ENCODE measurements at regions of chr17 and their contacts with region 1.

Region 1: DNA sequence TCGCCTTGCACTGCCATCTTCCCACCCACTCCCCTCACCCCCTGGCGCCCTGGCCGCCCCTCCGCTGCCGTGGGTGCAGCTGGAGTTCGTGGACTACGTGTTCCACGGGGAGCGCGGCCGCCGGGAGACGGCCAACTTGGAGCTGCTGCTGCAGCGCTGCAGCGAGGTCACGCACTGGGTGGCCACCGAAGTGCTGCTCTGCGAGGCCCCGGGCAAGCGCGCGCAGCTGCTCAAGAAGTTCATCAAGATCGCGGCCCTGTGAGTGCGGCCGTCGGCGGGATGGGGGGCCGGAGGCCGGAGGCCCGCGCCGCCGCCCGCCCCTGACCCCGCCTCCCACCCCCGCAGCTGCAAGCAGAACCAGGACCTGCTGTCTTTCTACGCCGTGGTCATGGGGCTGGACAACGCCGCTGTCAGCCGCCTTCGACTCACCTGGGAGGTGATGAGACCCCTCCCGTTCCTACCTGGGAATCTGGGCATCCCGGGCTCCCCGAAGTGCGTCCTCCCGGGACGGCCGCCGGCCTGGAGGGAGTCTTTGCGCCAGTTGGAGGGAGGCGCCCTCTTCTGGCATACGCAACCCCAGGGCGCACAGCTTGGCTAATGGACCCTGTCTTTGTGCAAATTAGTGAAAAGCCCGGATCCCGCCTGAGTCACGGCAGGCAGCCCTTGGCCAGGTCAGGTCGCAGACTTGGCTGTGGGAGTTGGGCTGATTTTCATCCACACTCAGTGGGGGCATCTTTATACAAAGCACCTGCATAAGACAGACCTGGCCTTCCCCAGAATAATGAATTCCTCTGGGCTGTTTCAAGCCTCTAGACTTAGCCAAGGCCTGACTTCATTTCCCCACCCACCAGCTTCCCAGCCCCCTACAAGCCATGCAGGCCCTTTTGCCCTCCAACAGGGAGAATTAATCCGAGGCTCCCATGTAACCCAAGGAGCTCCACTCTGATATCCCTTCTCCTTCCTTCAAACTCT is 14.3 kb downstream of the RAPGEFL1 start:
- DNase-seq: peak; percentile 86 to 96
- ATAC-seq: peak; percentile 83 to 91
- H3K4me3 ChIP-seq: peak overlapping the region; percentile 47
- H3K27ac ChIP-seq: peak overlapping the region; percentile 50 to 70
- H3K4me1 ChIP-seq: peaks cover 17% of the 10 kb centered on the region
- CTCF ChIP-seq: peak; percentile 95
- EP300 ChIP-seq: no peak
- POLR2A ChIP-seq: no peak; the same call in 1 of the 2 replicates
- RAD21 ChIP-seq: peak; percentile 74 to 77

Region 2: DNA sequence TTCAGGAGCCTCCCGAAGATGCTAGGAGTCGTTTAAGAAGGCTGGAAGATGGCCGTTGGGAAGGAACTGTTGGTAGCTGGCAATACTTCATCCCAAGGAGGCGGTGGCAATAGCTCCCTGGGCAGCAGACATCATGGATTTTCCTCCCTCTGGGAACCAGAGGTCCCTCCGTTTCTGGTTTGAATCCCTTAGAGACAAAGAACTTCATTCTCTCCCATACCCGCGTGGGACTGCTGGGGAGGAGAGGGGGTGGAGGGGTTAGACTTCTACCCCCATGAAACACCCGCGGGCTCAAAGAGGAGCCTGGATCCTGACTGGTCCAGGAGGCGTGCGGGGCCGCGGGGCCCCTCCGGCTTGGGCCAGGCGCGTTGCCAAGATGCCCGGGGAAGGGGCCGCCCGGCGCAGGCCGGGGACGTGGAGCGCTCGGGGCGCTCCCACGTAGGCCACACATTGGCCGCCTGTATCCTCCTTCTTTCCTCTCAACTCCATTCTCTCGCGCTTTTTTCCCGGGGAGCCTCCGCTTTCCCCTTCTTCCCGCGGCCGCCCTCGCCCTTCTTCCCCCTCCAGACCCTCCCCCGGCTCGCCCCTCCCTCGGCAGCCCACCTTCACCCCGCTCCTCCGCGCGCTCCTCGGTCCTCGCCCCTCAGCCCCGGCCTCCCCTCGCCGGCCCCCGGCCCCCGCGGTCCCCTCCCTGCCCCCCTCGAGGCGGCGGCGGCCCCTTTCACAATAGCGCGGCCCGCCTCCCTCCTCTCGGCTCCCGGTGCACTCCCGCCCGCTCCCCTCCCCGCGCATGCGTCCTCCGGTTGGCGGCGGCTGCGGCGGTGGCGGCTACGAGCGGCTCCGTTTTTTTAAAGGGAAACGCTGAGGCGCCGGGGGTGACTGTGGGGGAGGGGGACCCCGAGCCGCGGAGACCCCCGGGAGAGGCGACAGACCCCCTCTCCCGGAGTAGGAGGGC is 70.1 kb before region 1 on chr17 and contains the start of gene MSL1:
- CTCF ChIA-PET with region 1: interaction called, 116 read pairs
- POLR2A ChIA-PET with region 1: no interaction called
- DNase-seq: peak; percentile 83 to 91
- ATAC-seq: peak; percentile 75 to 76
- H3K4me3 ChIP-seq: peak within 1 kb of the TSS; percentile 67
- H3K27ac ChIP-seq: peak within 1 kb of the TSS; percentile 94 to 100
- H3K4me1 ChIP-seq: peaks cover 24% of the 10 kb centered on the region
- CTCF ChIP-seq: no peak
- EP300 ChIP-seq: no peak
- POLR2A ChIP-seq: peak; percentile 46
- RAD21 ChIP-seq: no peak; a peak in 1 of 5 replicates
- polyA plus RNA-seq, gene MSL1: 87.8 and 95.1 TPM in 2 replicates

Region 3: GRCh38 chr17:40177275-40177874 is 14.1 kb before region 1 on chr17 and contains the start of gene RAPGEFL1:
- CTCF ChIA-PET with region 1: interaction called, 195 read pairs
- POLR2A ChIA-PET with region 1: interaction called, 4 read pairs
- DNase-seq: no peak
- ATAC-seq: peak; percentile 26 to 53; a peak in 3 of 6 replicates
- H3K4me3 ChIP-seq: peak within 1 kb of the TSS; percentile 27; the same call in 2 of the 3 replicates
- H3K27ac ChIP-seq: peak within 1 kb of the TSS in 1 of 2 experiments; percentile 47; a peak in 2 of 6 replicates
- H3K4me1 ChIP-seq: peaks cover 26% of the 10 kb centered on the region
- CTCF ChIP-seq: no peak
- EP300 ChIP-seq: no peak
- POLR2A ChIP-seq: no peak
- RAD21 ChIP-seq: no peak
- polyA plus RNA-seq, gene RAPGEFL1: 3.7 and 4.1 TPM in 2 replicates

Region 4: GRCh38 chr17:40230670-40231069 is 39.1 kb after region 1 on chr17:
- CTCF ChIA-PET with region 1: interaction called, 12 read pairs
- POLR2A ChIA-PET with region 1: interaction called, 4 read pairs
- DNase-seq: no peak
- ATAC-seq: no peak
- H3K4me3 ChIP-seq: no peak overlapping the region
- H3K27ac ChIP-seq: no peak overlapping the region
- H3K4me1 ChIP-seq: no peaks in the 10 kb centered on the region
- CTCF ChIP-seq: no peak
- EP300 ChIP-seq: no peak
- POLR2A ChIP-seq: no peak
- RAD21 ChIP-seq: no peak

Region 5: GRCh38 chr17:40249049-40249448 is 57.5 kb after region 1 on chr17:
- CTCF ChIA-PET with region 1: no interaction called
- POLR2A ChIA-PET with region 1: no interaction called
- DNase-seq: no peak
- ATAC-seq: no peak
- H3K4me3 ChIP-seq: no peak overlapping the region
- H3K27ac ChIP-seq: no peak overlapping the region
- H3K4me1 ChIP-seq: peaks cover 13% of the 10 kb centered on the region
- CTCF ChIP-seq: no peak
- EP300 ChIP-seq: no peak
- POLR2A ChIP-seq: no peak
- RAD21 ChIP-seq: no peak

Region 6: DNA sequence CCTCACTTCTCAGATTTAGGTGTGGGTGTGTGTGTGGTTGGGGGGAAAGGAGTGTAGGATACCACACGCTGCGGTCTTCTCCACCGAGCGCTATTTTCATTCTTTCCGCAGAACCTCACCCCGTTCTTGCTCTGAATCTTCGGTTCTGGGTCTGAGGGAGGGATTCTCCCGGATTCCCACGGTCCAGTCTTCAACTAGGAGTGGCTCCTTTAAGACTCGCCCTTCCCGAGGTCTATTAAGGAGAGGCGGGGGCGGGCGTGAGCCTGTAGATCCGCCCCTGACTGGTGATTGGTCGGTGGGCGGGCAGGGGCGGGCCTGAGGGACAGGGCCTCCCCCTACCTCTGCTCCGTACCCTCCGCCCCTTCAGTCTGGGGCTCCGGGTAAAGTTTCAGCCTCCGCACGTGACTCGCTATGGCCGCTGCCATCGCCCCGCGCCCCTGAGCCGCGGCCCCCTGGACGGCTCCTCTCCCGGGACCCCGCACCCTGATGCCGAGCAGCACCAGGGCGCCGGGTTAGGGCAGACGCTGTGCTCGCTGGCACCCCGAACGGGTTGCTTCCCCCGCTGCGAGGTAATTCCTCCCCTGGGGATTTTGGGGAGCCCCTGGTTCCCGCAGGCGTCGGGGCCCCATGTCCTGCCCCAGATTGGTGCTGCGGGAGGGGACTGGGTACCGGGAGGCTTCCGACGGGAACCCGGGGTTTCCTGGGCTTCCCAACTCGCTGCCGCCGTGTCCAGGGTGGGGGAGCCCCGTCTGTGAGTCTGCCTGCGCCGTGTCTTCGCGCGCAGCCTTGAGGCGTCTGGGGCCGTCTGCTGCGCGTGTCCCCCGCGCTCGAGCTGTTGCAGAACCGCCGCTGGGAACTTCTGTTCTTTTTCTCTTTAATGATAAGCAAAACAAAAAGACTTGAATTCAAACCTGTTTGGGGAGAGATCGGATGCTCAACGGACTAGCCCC is 126.6 kb after region 1 on chr17:
- CTCF ChIA-PET with region 1: no interaction called
- POLR2A ChIA-PET with region 1: no interaction called
- DNase-seq: peak; percentile 98 to 99
- ATAC-seq: peak; percentile 69 to 87
- H3K4me3 ChIP-seq: peak overlapping the region; percentile 81
- H3K27ac ChIP-seq: peak overlapping the region; percentile 95 to 97
- H3K4me1 ChIP-seq: peaks cover 86% of the 10 kb centered on the region
- CTCF ChIP-seq: no peak
- EP300 ChIP-seq: no peak
- POLR2A ChIP-seq: peak; percentile 9
- RAD21 ChIP-seq: no peak

Measured in A549 (cell line).